BJ (cell line): ENCODE measurements at regions of chr5 and their contacts with region 1.

Region 1: GRCh38 chr5:149434162-149435014 is 55.3 kb upstream of the IL17B start:
- DNase-seq: no peak
- H3K4me3 ChIP-seq: no peak overlapping the region
- H3K27me3 ChIP-seq: no peaks in the 10 kb centered on the region
- CTCF ChIP-seq: peak; percentile 89

Region 2: DNA sequence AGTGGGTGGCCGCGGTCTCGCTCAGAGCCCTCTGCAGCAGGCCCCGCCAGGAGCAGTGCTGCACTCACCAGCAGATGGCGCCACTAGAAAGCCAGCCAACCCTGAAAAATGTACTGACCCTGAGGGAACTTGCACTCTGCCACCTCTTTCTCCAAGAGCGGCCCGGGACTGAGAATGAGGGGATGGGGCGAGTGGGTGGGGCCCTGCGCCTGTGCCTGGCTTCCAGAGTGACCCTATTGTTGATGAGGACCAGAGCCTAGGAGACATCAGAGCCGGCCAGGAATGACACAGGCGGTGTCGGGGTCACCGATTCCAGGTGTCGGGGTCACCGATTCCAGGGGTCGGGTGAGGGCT is 52.4 kb before region 1 on chr5:
- CTCF ChIA-PET with region 1: interaction called, 257 read pairs
- POLR2A ChIA-PET with region 1: no interaction called
- DNase-seq: no peak
- H3K4me3 ChIP-seq: no peak overlapping the region
- H3K27me3 ChIP-seq: peaks cover 1% of the 10 kb centered on the region; the same call in 1 of the 2 replicates
- CTCF ChIP-seq: peak; percentile 95

Region 3: DNA sequence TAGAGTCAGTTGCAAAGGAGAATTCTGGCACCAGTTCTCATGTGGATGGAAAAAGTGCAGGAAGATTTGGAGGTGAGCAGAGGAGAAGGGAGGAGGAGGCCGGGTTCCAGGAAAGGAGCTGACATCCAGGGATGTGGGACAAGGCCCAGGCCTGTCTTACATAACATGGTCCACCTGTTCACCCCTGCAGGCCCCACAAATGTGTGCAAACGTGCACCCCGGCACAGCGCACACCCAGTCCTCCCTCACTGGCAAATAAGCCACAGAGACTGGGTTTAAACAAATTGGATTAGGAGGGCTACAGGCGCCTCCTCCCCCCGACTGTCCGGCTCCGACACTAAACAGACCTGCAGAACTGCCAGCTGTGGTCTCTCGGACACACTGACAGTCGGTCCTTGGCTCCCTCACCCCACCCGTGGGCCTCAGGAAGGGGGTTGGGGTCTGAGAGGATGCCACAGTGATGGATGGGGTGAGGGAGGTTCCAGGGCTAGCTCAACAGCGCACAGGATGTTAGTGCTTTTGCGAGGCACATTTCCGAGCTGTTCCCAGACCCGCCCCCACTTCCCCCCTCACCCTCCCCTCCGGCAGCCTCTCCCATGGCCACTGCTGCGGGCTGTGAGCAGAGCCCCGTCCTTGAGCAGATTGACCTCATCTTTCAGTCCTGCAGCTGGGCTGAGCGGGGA is 11.9 kb before region 1 on chr5:
- CTCF ChIA-PET with region 1: interaction called, 15 read pairs
- POLR2A ChIA-PET with region 1: interaction called, 3 read pairs
- DNase-seq: peak; percentile 59
- H3K4me3 ChIP-seq: no peak overlapping the region
- H3K27me3 ChIP-seq: no peaks in the 10 kb centered on the region
- CTCF ChIP-seq: no peak

Region 4: GRCh38 chr5:149452007-149452664 is 17.7 kb after region 1 on chr5:
- CTCF ChIA-PET with region 1: no interaction called
- POLR2A ChIA-PET with region 1: no interaction called
- DNase-seq: no peak
- H3K4me3 ChIP-seq: no peak overlapping the region
- H3K27me3 ChIP-seq: no peaks in the 10 kb centered on the region
- CTCF ChIP-seq: no peak

Region 5: DNA sequence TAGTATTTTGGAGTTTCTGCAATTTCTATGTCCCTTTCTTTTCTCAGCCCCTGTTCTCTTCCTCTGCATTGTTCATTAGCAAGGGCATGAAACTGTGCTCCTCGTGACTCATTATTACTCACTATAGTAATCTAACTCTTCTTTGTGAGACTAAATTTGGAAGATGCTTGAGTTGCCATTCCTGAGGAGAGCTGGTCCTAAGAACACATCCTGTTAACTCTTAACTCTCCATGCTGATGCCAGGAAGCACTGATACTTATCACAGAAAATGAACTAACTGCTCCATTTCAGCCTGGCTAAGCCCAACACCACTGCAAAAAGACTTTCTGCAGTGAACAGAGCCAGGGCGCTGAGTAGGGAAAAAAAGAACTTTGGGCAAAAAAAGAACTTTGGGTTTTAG is 127.5 kb after region 1 on chr5:
- CTCF ChIA-PET with region 1: interaction called, 93 read pairs
- POLR2A ChIA-PET with region 1: no interaction called
- DNase-seq: peak; percentile 80
- H3K4me3 ChIP-seq: no peak overlapping the region
- H3K27me3 ChIP-seq: no peaks in the 10 kb centered on the region
- CTCF ChIP-seq: no peak

Region 6: GRCh38 chr5:149581192-149581861 is 146.9 kb after region 1 on chr5 and contains the start of gene ARHGEF37:
- CTCF ChIA-PET with region 1: interaction called, 10 read pairs
- POLR2A ChIA-PET with region 1: no interaction called
- DNase-seq: no peak
- H3K4me3 ChIP-seq: peak within 1 kb of the TSS; percentile 39
- H3K27me3 ChIP-seq: no peaks in the 10 kb centered on the region
- CTCF ChIP-seq: no peak
- polyA plus RNA-seq, gene ARHGEF37: 0.42 and 0.92 TPM in 2 replicates